ENCODE measurements at regions of chr5 and their contacts with region 1.

Region 1: GRCh38 chr5:115246361-115246991 is 16.2 kb downstream of the PGGT1B start:
- DNase-seq: no peak
- ATAC-seq: peak; percentile 64
- H3K4me3 Mint-ChIP-seq: no peak overlapping the region
- H3K27ac Mint-ChIP-seq: no peak overlapping the region
- H3K4me1 Mint-ChIP-seq: peaks cover 13% of the 10 kb centered on the region
- H3K27me3 Mint-ChIP-seq: no peaks in the 10 kb centered on the region

Region 2: GRCh38 chr5:115098041-115098702 is 148.3 kb before region 1 on chr5:
- CTCF ChIA-PET with region 1: interaction called, 52 read pairs
- DNase-seq: peak; percentile 43
- ATAC-seq: peak; percentile 60
- H3K4me3 Mint-ChIP-seq: no peak overlapping the region
- H3K27ac Mint-ChIP-seq: no peak overlapping the region
- H3K4me1 Mint-ChIP-seq: no peaks in the 10 kb centered on the region
- H3K27me3 Mint-ChIP-seq: peaks cover 35% of the 10 kb centered on the region

Region 3: DNA sequence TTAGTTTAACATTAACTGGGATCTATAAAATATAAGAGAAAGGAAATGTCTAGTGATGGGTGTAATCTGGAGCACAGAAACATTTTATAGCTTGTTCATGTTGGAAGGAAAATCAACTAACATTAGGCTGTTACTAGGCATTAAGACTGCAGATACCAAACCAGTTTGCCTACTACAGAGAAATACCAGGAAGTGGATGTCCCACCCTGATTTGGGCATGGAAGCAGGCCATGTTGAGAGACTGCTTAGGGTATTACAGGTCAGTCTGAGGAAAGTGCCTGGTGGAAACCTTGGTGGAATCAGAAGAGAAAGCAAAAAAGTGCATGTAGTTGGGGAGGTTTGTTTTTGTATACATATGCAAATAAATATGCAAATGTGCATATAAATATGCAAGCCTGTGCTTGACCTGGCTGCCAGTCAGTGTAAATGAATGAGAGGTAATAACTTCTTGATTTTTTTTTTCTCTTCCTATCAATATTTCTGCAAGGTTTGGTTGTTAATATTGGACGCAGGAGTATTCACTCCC is 59.6 kb after region 1 on chr5:
- CTCF ChIA-PET with region 1: no interaction called
- DNase-seq: no peak
- ATAC-seq: no peak
- H3K4me3 Mint-ChIP-seq: no peak overlapping the region
- H3K27ac Mint-ChIP-seq: no peak overlapping the region
- H3K4me1 Mint-ChIP-seq: peaks cover under 1% of the 10 kb centered on the region
- H3K27me3 Mint-ChIP-seq: peaks cover 38% of the 10 kb centered on the region

Region 4: GRCh38 chr5:115360046-115360685 is 113.7 kb after region 1 on chr5:
- CTCF ChIA-PET with region 1: no interaction called
- DNase-seq: no peak
- ATAC-seq: no peak
- H3K4me3 Mint-ChIP-seq: no peak overlapping the region
- H3K27ac Mint-ChIP-seq: no peak overlapping the region
- H3K4me1 Mint-ChIP-seq: no peaks in the 10 kb centered on the region
- H3K27me3 Mint-ChIP-seq: peaks cover 35% of the 10 kb centered on the region